CD8-positive, alpha-beta memory T cell (primary cell): ENCODE measurements at regions of chr4 and their contacts with region 1.

Region 1: GRCh38 chr4:122930862-122931261 is 8.5 kb upstream of the NUDT6 start:
- DNase-seq: no peak
- H3K4me3 ChIP-seq: no peak overlapping the region
- H3K4me3 Mint-ChIP-seq: no peak overlapping the region
- H3K27ac ChIP-seq: no peak overlapping the region
- H3K27ac Mint-ChIP-seq: no peak overlapping the region
- H3K4me1 ChIP-seq: no peaks in the 10 kb centered on the region
- H3K4me1 Mint-ChIP-seq: peaks cover 3 to 13% (median 5%) of the 10 kb centered on the region in 3 donors
- H3K27me3 ChIP-seq: no peaks in the 10 kb centered on the region
- H3K27me3 Mint-ChIP-seq: no peaks in the 10 kb centered on the region

Region 2: DNA sequence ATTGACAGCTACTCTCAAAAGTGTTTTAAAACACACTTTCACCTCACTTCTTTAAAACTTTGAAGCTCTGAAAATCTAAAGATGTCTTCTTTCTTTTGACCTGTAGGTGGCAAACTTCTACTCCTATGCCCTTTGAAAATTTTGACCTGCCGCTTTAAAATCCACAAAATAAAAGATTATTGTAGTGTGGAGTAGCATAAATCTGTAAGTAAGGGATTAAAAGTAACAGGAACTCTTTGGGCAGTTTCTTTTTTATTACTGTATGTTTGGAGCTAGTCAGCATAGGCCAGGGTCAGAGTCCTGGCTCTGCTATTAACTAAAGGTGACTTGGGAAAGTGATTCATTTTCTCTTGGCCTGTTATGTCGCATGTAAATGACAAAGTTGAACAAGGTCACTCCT is 172.8 kb before region 1 on chr4:
- CTCF ChIA-PET with region 1: interaction called, 23 read pairs
- POLR2A ChIA-PET with region 1: no interaction called
- DNase-seq: peak in 2 of 5 donors; percentile 18
- H3K4me3 ChIP-seq: no peak overlapping the region
- H3K4me3 Mint-ChIP-seq: no peak overlapping the region
- H3K27ac ChIP-seq: peak overlapping the region; percentile 11
- H3K27ac Mint-ChIP-seq: no peak overlapping the region
- H3K4me1 ChIP-seq: peaks cover 9% of the 10 kb centered on the region
- H3K4me1 Mint-ChIP-seq: peaks cover 17 to 22% (median 20%) of the 10 kb centered on the region in 3 donors
- H3K27me3 ChIP-seq: no peaks in the 10 kb centered on the region
- H3K27me3 Mint-ChIP-seq: peaks cover 3 to 16% of the 10 kb centered on the region in 2 donors

Region 3: DNA sequence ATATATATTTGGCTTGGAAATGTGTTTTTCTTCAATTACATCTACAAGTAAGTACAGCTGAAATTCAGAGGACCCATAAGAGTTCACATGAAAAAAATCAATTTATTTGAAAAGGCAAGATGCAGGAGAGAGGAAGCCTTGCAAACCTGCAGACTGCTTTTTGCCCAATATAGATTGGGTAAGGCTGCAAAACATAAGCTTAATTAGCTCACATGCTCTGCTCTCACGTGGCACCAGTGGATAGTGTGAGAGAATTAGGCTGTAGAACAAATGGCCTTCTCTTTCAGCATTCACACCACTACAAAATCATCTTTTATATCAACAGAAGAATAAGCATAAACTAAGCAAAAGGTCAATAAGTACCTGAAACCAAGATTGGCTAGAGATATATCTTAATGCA is 34.6 kb before region 1 on chr4:
- CTCF ChIA-PET with region 1: no interaction called
- POLR2A ChIA-PET with region 1: no interaction called
- DNase-seq: no peak
- H3K4me3 ChIP-seq: no peak overlapping the region
- H3K4me3 Mint-ChIP-seq: no peak overlapping the region
- H3K27ac ChIP-seq: no peak overlapping the region
- H3K27ac Mint-ChIP-seq: peak overlapping the region in 1 of 8 donors; percentile 57
- H3K4me1 ChIP-seq: no peaks in the 10 kb centered on the region
- H3K4me1 Mint-ChIP-seq: no peaks in the 10 kb centered on the region
- H3K27me3 ChIP-seq: no peaks in the 10 kb centered on the region
- H3K27me3 Mint-ChIP-seq: peaks cover 0 to 1% of the 10 kb centered on the region in 2 donors

Region 4: GRCh38 chr4:122963216-122963615 is 32.4 kb after region 1 on chr4:
- CTCF ChIA-PET with region 1: no interaction called
- POLR2A ChIA-PET with region 1: no interaction called
- DNase-seq: no peak
- H3K4me3 ChIP-seq: no peak overlapping the region
- H3K4me3 Mint-ChIP-seq: no peak overlapping the region
- H3K27ac ChIP-seq: no peak overlapping the region
- H3K27ac Mint-ChIP-seq: no peak overlapping the region
- H3K4me1 ChIP-seq: no peaks in the 10 kb centered on the region
- H3K4me1 Mint-ChIP-seq: peaks cover 4 to 16% (median 15%) of the 10 kb centered on the region in 3 donors
- H3K27me3 ChIP-seq: no peaks in the 10 kb centered on the region
- H3K27me3 Mint-ChIP-seq: no peaks in the 10 kb centered on the region